Gastrocnemius medialis (tissue), 4 donors: ENCODE measurements at regions of chr14 and their contacts with region 1.

Region 1: GRCh38 chr14:73295198-73295796 is 58.0 kb downstream of the PAPLN start:
- DNase-seq: no peak
- ATAC-seq: no peak
- H3K4me3 ChIP-seq: no peak overlapping the region
- H3K27ac ChIP-seq: no peak overlapping the region
- H3K4me1 ChIP-seq: no peaks in the 10 kb centered on the region
- H3K27me3 ChIP-seq: no peaks in the 10 kb centered on the region
- CTCF ChIP-seq: peak; percentile 46 to 67 (median 51)
- POLR2A ChIP-seq: no peak

Region 2: DNA sequence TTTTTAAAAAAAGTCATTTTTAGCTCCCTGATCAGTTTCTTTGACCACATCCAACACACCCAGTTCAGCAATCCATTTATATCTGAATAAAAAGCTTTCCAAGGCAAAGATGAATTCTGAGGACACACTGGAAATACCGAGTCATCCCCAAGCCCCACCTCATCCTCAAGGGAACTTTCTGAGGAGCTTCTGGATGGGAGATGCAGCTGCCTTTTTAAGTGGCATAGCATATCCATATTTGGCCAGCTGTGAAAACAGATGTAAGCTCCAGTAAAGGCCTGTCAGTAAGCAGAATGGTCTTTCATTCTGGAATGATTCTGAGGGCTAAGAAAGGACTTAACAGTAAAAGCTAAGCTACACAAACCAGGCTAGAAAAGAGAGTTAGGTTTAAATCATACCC is 286.8 kb before region 1 on chr14:
- in situ Hi-C with region 1: no loop called
- intact Hi-C with region 1: no loop called
- DNase-seq: peak in 1 of 2 donors; percentile 22
- ATAC-seq: peak; percentile 32 to 62
- H3K4me3 ChIP-seq: no peak overlapping the region
- H3K27ac ChIP-seq: peak overlapping the region; percentile 42 to 58 (median 54)
- H3K4me1 ChIP-seq: peaks cover 9 to 27% of the 10 kb centered on the region in 2 donors
- H3K27me3 ChIP-seq: no peaks in the 10 kb centered on the region
- CTCF ChIP-seq: no peak
- POLR2A ChIP-seq: no peak

Region 3: DNA sequence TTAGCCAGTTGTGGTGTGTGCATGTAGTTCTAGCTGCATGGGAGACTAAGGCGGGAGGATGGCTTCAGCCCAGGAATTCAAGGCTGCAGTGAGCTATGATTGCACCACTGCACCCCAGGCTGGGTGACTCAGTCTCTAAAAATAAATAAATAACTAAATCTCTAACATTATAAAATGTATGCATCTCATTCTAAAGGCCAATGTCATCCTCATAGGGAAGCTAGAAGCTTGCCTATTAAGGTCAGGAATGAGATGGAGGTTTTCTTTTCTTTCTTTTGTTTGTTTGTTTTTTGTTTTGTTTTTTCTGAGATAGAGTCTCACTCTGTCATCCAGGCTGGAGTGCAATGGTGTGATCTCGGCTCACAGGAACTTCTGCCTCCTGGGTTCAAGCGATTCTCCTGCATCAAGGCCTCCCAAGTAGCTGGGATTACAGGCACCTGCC is 106.8 kb before region 1 on chr14:
- in situ Hi-C with region 1: no loop called
- intact Hi-C with region 1: no loop called
- DNase-seq: peak in 1 of 2 donors; percentile 56
- ATAC-seq: peak; percentile 80 to 81
- H3K4me3 ChIP-seq: no peak overlapping the region
- H3K27ac ChIP-seq: peak overlapping the region; percentile 49 to 76 (median 57)
- H3K4me1 ChIP-seq: peaks cover 0 to 6% of the 10 kb centered on the region in 2 donors
- H3K27me3 ChIP-seq: no peaks in the 10 kb centered on the region
- CTCF ChIP-seq: no peak
- POLR2A ChIP-seq: no peak

Region 4: DNA sequence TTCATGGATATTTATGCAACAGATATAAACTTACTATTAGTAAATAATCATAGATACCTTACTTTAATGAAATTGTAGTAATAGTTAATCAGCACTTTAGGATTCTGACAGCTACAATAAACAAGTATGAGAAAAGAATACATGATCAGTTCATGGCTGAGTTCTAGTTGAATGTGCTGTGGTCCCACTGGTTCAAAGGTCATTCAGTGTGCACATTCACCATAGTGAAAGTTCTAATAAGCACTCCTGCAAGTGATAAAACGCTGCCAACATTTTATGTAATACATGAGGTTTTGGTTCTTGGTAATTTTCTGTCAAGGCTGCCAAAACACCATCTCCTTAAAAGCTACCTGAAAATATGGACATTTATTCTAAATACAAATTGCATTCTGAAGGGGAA is 70.4 kb after region 1 on chr14:
- in situ Hi-C with region 1: no loop called
- intact Hi-C with region 1: no loop called
- DNase-seq: no peak
- ATAC-seq: no peak
- H3K4me3 ChIP-seq: no peak overlapping the region
- H3K27ac ChIP-seq: no peak overlapping the region
- H3K4me1 ChIP-seq: no peaks in the 10 kb centered on the region
- H3K27me3 ChIP-seq: no peaks in the 10 kb centered on the region
- CTCF ChIP-seq: no peak
- POLR2A ChIP-seq: no peak

Region 5: DNA sequence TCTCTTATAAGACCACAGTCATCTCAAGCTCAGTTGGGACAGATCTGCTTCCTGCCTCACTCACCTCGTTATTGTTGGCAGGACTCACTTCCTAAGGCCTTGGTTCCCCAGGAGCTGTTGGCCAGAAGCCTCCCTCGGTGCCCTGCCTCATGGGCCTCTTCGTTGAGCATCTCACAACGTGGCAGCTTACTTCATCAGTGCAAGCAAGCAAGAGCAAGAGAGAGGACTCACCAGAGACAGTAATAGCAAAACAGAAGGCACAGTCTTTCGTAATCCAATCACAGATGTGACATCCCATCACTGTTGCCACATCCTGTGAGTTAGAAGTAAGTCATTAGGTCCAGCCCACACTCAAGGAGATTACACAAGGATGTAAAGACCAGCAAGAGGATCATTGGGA is 168.1 kb after region 1 on chr14:
- in situ Hi-C with region 1: loop called in 2 of 4 experiments (anchors 5 kb)
- intact Hi-C with region 1: no loop called
- DNase-seq: peak; percentile 23 to 52
- ATAC-seq: peak; percentile 30 to 42
- H3K4me3 ChIP-seq: no peak overlapping the region
- H3K27ac ChIP-seq: peak overlapping the region; percentile 11 to 52 (median 40)
- H3K4me1 ChIP-seq: peaks cover 21 to 41% of the 10 kb centered on the region in 2 donors
- H3K27me3 ChIP-seq: no peaks in the 10 kb centered on the region
- CTCF ChIP-seq: no peak
- POLR2A ChIP-seq: peak in 1 of 2 donors; percentile 10

Region 6: DNA sequence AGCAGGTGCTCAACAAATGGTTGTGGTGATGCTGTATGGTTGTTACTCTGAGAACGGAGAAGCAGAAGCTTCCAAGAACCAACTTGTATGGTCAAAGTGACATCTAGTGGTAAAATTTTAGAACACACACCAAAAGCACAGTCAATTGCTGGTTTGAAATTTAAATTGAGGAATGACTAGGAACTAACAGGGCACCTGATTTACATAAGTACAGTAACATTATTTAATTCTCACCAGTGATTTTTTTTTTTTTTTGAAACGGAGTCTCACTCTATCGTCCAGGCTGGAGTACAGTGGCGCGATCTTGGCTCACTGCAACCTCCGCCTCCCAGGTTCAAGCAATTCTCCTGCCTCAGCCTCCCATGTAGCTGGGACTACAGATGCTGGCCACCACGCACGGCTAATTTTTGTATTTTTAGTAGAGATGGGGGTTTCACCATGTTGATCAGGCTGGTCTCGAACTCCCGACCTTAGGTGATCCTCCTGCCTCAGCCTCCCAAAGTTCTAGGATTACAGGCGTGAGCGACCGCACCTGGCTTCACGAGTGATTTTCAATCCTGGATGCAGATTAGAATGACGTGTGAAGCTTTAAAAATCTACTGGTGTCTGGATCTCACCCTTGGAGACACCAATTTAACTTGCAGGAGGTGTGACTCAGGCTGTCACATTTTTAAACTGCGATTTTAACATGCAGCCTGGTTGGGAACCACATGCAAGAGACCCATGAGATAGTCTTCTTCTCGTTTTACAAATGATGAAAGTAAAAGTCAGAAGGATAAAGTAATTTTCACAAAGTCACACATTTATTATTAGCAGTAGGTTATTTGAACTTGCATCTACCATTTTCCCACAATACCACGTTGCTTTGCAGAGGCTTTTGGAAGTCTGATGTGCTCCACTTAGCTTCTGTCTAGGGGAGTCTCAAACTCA is 177.2 kb after region 1 on chr14:
- in situ Hi-C with region 1: loop called (anchors 5 to 10 kb)
- intact Hi-C with region 1: loop called (anchors 1 kb)
- DNase-seq: no peak
- ATAC-seq: peak; percentile 73 to 95
- H3K4me3 ChIP-seq: no peak overlapping the region
- H3K27ac ChIP-seq: no peak overlapping the region
- H3K4me1 ChIP-seq: no peaks in the 10 kb centered on the region
- H3K27me3 ChIP-seq: no peaks in the 10 kb centered on the region
- CTCF ChIP-seq: peak; percentile 57 to 78 (median 72)
- POLR2A ChIP-seq: no peak